ENCODE measurements at regions of chr13 and their contacts with region 1.

Region 1: GRCh38 chr13:27194895-27195764 is 23.5 kb upstream of the USP12 start:
- DNase-seq: no peak
- H3K4me3 Mint-ChIP-seq: no peak overlapping the region
- H3K27ac Mint-ChIP-seq: peak overlapping the region; percentile 51
- H3K4me1 Mint-ChIP-seq: peaks cover 36% of the 10 kb centered on the region
- H3K27me3 Mint-ChIP-seq: peaks cover 8% of the 10 kb centered on the region

Region 2: GRCh38 chr13:26719356-26719945 is 475.7 kb before region 1 on chr13:
- intact Hi-C with region 1: no loop called
- DNase-seq: no peak
- H3K4me3 Mint-ChIP-seq: no peak overlapping the region
- H3K27ac Mint-ChIP-seq: no peak overlapping the region
- H3K4me1 Mint-ChIP-seq: peaks cover 13% of the 10 kb centered on the region
- H3K27me3 Mint-ChIP-seq: no peaks in the 10 kb centered on the region

Region 3: GRCh38 chr13:26861941-26862340 is 333.2 kb before region 1 on chr13:
- intact Hi-C with region 1: no loop called
- DNase-seq: no peak
- H3K4me3 Mint-ChIP-seq: no peak overlapping the region
- H3K27ac Mint-ChIP-seq: no peak overlapping the region
- H3K4me1 Mint-ChIP-seq: no peaks in the 10 kb centered on the region
- H3K27me3 Mint-ChIP-seq: peaks cover 3% of the 10 kb centered on the region

Region 4: DNA sequence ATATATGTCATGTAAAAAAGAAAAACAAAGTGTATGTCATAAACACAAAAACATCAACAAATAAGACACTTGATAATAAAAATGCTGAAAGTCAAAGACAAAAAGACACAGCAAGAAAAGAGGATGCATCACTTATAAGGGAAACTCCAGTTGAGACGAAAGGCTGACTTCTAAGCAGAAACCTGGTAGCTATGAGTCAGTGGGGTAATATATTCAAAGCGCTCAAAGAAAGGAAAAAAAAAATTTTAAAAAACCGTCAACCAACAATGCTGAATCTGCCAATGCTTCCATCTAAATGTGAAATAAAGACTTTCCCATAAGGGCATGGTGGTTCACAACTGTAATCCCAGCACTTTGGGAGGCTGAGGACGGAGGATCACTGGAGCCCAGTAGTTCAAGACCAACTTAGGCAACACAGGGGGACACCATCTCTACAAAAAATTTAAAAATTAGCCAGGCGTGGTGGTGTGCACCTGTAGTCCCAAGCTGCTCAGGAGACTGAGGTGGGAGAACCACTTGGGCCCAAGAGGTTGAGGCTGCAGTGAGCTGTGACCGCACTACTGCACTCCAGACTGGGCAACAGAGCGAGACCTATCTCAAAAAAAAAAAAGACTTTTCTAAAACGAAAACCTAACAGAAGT is 47.5 kb before region 1 on chr13:
- intact Hi-C with region 1: loop called (anchors 2 kb)
- DNase-seq: no peak
- H3K4me3 Mint-ChIP-seq: peak overlapping the region; percentile 55
- H3K27ac Mint-ChIP-seq: peak overlapping the region; percentile 93
- H3K4me1 Mint-ChIP-seq: peaks cover 71% of the 10 kb centered on the region
- H3K27me3 Mint-ChIP-seq: no peaks in the 10 kb centered on the region

Region 5: GRCh38 chr13:27242706-27243105 is 47.6 kb after region 1 on chr13:
- intact Hi-C with region 1: loop called (anchors 5 kb)
- DNase-seq: no peak
- H3K4me3 Mint-ChIP-seq: no peak overlapping the region
- H3K27ac Mint-ChIP-seq: no peak overlapping the region
- H3K4me1 Mint-ChIP-seq: no peaks in the 10 kb centered on the region
- H3K27me3 Mint-ChIP-seq: peaks cover 4% of the 10 kb centered on the region